Activated CD4-positive, alpha-beta memory T cell treated with anti-CD3 and anti-CD28 coated beads for 36 hours (primary cell): ENCODE measurements at regions of chr10 and their contacts with region 1.

Region 1: GRCh38 chr10:97498076-97498840 is at the start of gene MMS19:
- DNase-seq: peak; percentile 99
- H3K4me3 Mint-ChIP-seq: peak within 1 kb of the TSS; percentile 98
- H3K27ac Mint-ChIP-seq: peak within 1 kb of the TSS; percentile 97
- H3K4me1 Mint-ChIP-seq: peaks cover 33% of the 10 kb centered on the region
- H3K27me3 Mint-ChIP-seq: peaks cover 23% of the 10 kb centered on the region
- total RNA-seq, gene MMS19: 84.7 to 86.8 TPM

Region 2: DNA sequence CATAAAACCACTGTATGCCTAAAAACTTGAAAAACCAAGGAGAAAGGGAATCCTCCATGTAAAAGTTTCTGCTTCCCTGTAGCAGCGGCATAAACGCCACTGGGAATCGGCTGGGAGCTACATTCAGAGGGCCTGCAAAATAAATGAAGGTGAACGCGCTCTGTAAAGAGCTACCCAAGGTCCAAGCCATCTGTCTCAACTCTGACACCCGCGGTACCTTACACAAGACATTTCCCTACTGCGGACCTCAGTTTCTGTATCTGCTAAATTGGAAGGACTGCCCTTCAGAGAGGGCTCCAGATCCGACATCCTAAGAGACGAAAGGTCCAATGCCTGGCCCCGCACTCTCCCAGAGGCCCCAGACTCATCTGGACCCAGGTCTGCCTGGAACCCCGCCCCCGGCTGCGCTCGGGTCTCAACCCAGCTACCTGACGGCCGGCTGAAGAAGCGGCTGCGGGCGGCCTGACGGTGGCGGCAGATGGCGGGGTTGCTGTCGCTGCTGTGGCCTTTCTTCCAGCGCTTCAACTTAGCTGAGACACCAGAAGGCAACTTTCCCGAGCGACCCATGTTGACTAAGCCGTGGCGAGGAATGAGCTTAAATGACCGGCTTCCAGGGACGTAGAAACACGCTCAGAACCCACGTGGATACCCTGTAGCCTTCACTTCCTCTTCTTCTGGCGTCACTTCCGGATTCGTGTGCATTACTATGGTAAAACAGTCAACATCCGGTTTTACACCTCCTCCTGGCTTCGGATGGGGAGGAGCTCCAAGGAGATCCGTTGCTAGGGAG is 97.4 kb before region 1 on chr10 and contains the start of gene RRP12:
- CTCF ChIA-PET with region 1: no interaction called
- POLR2A ChIA-PET with region 1: interaction called, 3 read pairs
- intact Hi-C with region 1: loop called (anchors 1 kb)
- DNase-seq: peak; percentile 88
- H3K4me3 Mint-ChIP-seq: peak within 1 kb of the TSS; percentile 93
- H3K27ac Mint-ChIP-seq: peak within 1 kb of the TSS; percentile 88
- H3K4me1 Mint-ChIP-seq: peaks cover 10% of the 10 kb centered on the region
- H3K27me3 Mint-ChIP-seq: no peaks in the 10 kb centered on the region
- total RNA-seq, gene RRP12: 40.4 to 41.8 TPM

Region 3: GRCh38 chr10:97445722-97446639 is 52.3 kb before region 1 on chr10 and contains the starts of genes EXOSC1 and ZDHHC16:
- CTCF ChIA-PET with region 1: no interaction called
- POLR2A ChIA-PET with region 1: interaction called, 9 read pairs
- intact Hi-C with region 1: loop called (anchors 1 kb)
- DNase-seq: peak; percentile 96
- H3K4me3 Mint-ChIP-seq: peak within 1 kb of the TSS; percentile 99
- H3K27ac Mint-ChIP-seq: peak within 1 kb of the TSS; percentile 58
- H3K4me1 Mint-ChIP-seq: peaks cover 57% of the 10 kb centered on the region
- H3K27me3 Mint-ChIP-seq: no peaks in the 10 kb centered on the region
- total RNA-seq, gene EXOSC1: 69.0 to 75.1 TPM
- total RNA-seq, gene ZDHHC16: 42.5 to 43.6 TPM

Region 4: DNA sequence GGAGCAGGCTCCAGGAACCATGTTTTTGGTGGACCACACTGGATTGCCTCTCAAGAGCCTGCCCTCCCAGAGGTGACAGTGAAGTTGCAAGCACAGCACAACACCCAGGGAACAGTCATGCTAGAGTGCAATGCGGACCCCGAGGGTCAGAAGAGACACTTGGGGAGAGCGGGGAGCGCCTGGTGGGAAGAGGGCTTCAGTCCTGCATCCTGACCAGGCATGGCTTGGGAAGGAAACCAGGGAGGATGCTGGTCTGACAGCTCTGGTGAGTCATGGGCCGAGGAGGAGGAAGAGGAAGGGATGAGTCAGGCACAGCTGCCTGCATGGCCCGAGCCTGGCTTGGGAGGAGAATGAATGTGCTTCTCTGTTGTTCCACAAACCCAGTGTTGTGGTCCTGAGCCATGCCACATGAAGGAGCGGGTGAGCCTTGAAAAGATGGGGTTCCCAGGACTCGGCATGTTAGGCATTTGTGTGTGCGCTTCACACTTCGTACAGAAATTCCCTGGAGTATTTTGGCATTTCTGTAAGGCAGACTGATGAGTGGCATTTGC is 44.8 kb after region 1 on chr10:
- CTCF ChIA-PET with region 1: interaction called, 3 read pairs
- POLR2A ChIA-PET with region 1: no interaction called
- intact Hi-C with region 1: loop called (anchors 2 kb)
- DNase-seq: peak; percentile 86
- H3K4me3 Mint-ChIP-seq: no peak overlapping the region
- H3K27ac Mint-ChIP-seq: peak overlapping the region; percentile 38
- H3K4me1 Mint-ChIP-seq: peaks cover 22% of the 10 kb centered on the region
- H3K27me3 Mint-ChIP-seq: peaks cover 2% of the 10 kb centered on the region

Region 5: DNA sequence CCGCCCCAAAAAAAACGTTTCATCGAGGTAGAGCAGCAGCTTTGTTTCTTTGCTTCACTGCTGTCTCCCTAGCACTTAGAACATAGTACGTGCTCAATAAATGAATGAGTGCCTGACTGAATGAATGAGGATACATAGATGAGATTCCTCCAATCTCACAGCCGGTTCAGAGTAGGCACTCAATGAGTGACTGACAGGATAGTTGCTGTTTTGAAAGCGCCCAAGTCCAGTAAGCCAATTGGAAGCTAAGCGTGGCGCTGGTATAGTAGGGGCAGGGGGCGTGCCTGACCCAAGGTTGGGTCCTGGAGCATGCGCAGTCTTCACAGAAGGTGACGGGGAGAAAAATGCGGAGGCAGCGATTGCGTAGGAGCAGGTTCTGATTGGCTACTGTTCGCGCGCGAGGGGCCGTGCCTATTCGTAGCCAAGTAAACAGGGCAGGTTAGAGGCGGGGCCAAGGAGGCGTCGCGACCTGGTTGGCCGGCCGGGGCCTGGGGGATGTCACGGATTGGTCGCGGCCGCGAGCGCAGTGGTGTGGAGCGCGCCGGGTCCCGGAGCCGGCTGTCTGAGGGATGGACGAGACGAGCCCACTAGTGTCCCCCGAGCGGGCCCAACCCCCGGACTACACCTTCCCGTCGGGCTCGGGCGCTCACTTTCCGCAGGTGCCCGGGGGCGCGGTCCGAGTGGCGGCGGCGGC is 142.1 kb after region 1 on chr10 and contains the start of gene PI4K2A:
- CTCF ChIA-PET with region 1: no interaction called
- POLR2A ChIA-PET with region 1: interaction called, 3 read pairs
- intact Hi-C with region 1: loop called (anchors 1 kb)
- DNase-seq: peak; percentile 100
- H3K4me3 Mint-ChIP-seq: peak within 1 kb of the TSS; percentile 97
- H3K27ac Mint-ChIP-seq: peak within 1 kb of the TSS; percentile 79
- H3K4me1 Mint-ChIP-seq: peaks cover 17% of the 10 kb centered on the region
- H3K27me3 Mint-ChIP-seq: no peaks in the 10 kb centered on the region
- total RNA-seq, gene PI4K2A: 13.1 to 13.2 TPM